ENCODE measurements at regions of chr2 and their contacts with region 1.

Region 1: DNA sequence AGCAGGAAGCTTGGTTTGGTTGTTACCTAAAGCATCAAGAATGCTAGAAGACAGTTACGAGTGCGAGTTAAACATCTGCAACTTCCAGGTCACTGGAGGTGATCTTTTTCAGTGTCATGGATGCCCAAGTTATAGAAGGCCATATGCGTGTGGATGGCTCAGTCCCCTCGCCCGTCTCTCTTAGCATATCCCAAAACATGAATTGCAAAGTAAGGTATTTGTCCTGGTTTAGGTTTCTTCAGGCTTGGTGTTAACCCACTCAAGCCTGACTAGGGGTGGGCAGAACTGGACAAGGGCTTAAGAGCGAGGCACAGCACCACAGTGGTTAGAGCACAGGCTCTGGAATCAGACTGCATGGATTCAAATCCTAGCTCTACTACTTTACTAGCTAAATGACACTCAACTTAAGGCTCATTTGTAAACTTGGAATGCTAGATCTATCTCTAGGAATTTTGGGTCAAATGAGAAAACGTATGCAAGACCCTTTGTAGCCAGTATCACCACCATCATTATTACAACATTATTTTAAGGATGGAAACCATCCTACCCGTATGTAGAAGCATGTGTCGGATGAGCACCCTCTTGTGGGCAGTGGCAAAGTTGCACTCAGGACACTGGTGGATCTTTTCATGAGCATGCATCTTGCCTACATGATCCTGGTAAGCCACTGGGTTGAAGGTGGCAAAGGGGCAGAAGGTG is 11.2 kb downstream of the ZNF142 start:
- DNase-seq: peak; percentile 32
- ATAC-seq: peak; percentile 89
- H3K4me3 ChIP-seq: no peak overlapping the region
- H3K27ac ChIP-seq: no peak overlapping the region
- H3K4me1 ChIP-seq: no peaks in the 10 kb centered on the region
- H3K27me3 ChIP-seq: no peaks in the 10 kb centered on the region
- CTCF ChIP-seq: peak; percentile 82 to 89 (median 89)
- POLR2A ChIP-seq: no peak
- RAD21 ChIP-seq: peak; percentile 87

Region 2: DNA sequence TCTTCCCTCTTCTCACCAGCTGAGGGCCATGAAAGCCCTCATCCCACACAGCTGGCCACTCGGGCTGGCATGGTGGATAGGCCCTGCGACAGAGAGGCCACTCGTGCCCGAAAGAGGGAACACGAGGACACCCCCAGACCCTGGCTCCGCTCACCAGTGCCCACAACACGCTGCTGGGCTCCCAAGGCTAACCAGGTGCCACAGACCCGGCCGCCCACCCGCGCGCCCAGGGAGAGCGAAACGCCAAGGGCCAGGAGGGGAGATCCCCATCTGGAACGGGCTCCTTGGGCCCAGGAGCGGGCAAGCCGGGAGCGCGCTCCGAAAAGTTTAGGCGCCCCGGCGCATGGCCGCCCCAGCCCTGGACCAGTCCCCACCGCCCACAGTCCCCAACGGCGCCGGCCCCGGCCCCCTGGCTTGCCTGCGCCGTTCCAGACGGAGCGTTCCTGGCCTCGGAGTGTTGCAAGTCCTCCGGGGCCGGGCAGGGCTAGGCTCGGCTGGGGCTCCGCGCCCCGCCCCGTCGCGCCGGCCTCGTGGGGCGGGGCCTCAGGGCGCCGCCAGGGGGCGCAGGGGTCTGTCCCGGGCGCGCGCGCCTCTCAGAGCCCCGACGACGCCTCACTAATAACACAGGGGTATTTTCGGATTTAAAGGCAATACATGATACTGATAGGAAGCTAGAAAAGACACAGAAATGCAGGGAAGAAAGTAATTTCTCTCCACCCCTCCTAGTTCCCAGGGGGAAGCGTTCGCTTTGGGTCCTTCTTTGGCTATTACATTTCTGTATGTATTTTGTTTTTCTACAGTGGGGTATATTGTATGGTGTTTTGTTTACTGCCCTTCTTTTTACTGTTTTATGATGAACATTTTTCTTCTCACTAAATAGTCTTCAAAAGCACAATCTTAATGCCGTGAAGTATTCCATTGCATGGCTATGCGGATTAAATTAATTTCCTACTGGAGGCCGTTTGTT is 355.9 kb before region 1 on chr2 and contains the start of gene TMBIM1:
- CTCF ChIA-PET with region 1: no interaction called
- POLR2A ChIA-PET with region 1: no interaction called
- RAD21 ChIA-PET with region 1: no interaction called
- intact Hi-C with region 1: loop called (anchors 1 kb)
- DNase-seq: no peak
- ATAC-seq: peak; percentile 89
- H3K4me3 ChIP-seq: peak within 1 kb of the TSS; percentile 75 to 96
- H3K27ac ChIP-seq: peak within 1 kb of the TSS; percentile 79
- H3K4me1 ChIP-seq: peaks cover 45 to 83% of the 10 kb centered on the region in 2 experiments
- H3K27me3 ChIP-seq: no peaks in the 10 kb centered on the region
- CTCF ChIP-seq: peak in 2 of 3 experiments; percentile 63 to 79; a peak in 4 of 6 replicates
- POLR2A ChIP-seq: peak; percentile 50
- RAD21 ChIP-seq: no peak
- total RNA-seq, gene TMBIM1: 91.0 TPM

Region 3: GRCh38 chr2:218406209-218406948 is 241.9 kb before region 1 on chr2:
- CTCF ChIA-PET with region 1: no interaction called
- POLR2A ChIA-PET with region 1: no interaction called
- RAD21 ChIA-PET with region 1: no interaction called
- intact Hi-C with region 1: loop called (anchors 1 kb)
- DNase-seq: peak; percentile 84
- ATAC-seq: peak; percentile 92
- H3K4me3 ChIP-seq: peak overlapping the region; percentile 36 to 61
- H3K27ac ChIP-seq: peak overlapping the region; percentile 90
- H3K4me1 ChIP-seq: peaks cover 22 to 28% of the 10 kb centered on the region in 2 experiments
- H3K27me3 ChIP-seq: no peaks in the 10 kb centered on the region
- CTCF ChIP-seq: peak in 2 of 3 experiments; percentile 72 to 75; a peak in 4 of 6 replicates
- POLR2A ChIP-seq: no peak
- RAD21 ChIP-seq: no peak

Region 4: DNA sequence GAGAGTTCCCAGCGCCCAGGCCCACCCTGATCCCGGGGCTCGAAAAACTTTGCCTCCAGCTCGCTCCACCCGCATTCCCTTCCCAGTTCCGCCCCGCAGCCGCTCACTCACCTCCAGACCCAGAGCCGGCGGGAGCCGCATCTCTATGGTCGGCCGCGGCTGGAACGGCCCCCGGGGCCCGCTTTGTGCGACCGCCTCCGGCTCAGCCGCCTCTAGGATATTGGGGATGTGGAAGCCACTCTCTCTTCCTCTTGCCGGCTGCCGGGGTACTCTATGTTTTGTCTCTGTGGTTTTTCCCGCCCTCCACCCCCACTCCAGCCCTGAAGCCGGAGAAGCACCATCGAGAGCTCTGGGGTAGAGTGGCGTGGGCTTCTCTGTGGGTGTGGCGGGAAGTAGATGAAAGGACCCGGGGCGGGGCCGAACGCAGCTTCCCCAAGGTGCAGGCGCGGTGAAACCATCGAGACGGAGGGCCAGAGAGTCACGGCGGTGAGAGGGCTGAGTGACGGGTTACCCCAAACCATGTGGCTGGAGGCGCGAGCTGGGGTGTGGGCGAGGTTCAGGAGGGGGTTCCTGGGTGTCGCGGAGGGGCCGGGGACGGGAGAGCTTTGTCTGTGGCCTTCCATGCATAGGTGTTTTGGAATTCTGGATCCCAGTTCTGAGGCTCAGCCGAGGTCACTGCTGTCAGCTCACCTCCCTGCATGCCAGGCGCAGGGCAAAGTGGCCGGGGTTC is 11.2 kb after region 1 on chr2 and contains the starts of genes BCS1L and ZNF142:
- CTCF ChIA-PET with region 1: interaction called, 18 read pairs
- POLR2A ChIA-PET with region 1: no interaction called
- RAD21 ChIA-PET with region 1: no interaction called
- intact Hi-C with region 1: no loop called
- DNase-seq: peak; percentile 81
- ATAC-seq: peak; percentile 89
- H3K4me3 ChIP-seq: peak within 1 kb of the TSS; percentile 88 to 96
- H3K27ac ChIP-seq: peak within 1 kb of the TSS; percentile 70
- H3K4me1 ChIP-seq: peaks cover 0 to 19% of the 10 kb centered on the region in 2 experiments; a peak in 2 of 4 replicates
- H3K27me3 ChIP-seq: no peaks in the 10 kb centered on the region
- CTCF ChIP-seq: no peak
- POLR2A ChIP-seq: peak; percentile 57
- RAD21 ChIP-seq: no peak
- total RNA-seq, gene BCS1L: 57.4 TPM
- total RNA-seq, gene ZNF142: 29.2 TPM

Measured in HCT116 (cell line).